ENCODE measurements at regions of chr4 and their contacts with region 1.

Region 1: DNA sequence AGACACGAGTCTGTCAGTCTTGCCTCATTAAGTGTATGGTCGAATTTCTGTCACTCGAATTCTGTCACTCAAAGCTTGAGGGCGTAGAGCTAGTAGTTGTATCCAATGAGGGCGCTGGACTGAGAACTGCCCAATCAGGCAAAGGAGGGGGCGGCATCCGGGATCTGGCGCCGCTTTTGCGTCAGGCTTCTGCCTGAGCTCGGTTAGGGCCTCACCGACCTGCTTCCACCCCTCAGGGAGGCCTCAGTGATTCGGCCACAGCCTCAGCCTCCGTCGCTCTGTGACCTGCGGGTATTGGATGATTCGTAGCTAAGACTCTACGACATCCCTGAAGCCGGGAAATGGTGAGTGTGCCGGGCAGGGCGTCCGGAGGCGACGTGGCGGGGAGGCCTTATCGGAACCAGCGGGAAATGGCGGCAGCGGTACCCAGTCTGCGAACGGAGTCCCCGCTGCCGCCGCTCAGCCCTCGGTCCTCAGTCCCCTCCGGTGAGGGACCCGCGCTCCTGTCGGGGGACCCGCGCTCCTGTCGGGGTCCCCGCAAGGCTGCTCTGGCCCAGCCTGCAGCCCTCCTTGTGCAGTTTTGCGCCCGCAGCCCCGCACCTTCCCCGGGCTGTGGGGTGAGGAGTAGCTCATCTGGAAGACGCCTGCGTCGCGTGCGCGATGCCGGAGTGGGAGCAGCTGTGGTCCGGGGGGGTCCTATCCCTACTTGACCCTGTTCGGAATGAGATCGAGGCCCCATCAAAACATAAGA is 88.3 kb downstream of the ZNF718 start:
- DNase-seq: peak; percentile 87

Region 2: GRCh38 chr4:124275-125081 is 88.1 kb before region 1 on chr4 and contains the start of gene ZNF718:
- intact Hi-C with region 1: loop called (anchors 5 kb)
- DNase-seq: peak; percentile 96
- total RNA-seq, gene ZNF718: 5.0 TPM

Region 3: GRCh38 chr4:721261-722168 is 508.9 kb after region 1 on chr4:
- intact Hi-C with region 1: no loop called
- DNase-seq: no peak